ENCODE measurements at regions of chr17 and their contacts with region 1.

Region 1: DNA sequence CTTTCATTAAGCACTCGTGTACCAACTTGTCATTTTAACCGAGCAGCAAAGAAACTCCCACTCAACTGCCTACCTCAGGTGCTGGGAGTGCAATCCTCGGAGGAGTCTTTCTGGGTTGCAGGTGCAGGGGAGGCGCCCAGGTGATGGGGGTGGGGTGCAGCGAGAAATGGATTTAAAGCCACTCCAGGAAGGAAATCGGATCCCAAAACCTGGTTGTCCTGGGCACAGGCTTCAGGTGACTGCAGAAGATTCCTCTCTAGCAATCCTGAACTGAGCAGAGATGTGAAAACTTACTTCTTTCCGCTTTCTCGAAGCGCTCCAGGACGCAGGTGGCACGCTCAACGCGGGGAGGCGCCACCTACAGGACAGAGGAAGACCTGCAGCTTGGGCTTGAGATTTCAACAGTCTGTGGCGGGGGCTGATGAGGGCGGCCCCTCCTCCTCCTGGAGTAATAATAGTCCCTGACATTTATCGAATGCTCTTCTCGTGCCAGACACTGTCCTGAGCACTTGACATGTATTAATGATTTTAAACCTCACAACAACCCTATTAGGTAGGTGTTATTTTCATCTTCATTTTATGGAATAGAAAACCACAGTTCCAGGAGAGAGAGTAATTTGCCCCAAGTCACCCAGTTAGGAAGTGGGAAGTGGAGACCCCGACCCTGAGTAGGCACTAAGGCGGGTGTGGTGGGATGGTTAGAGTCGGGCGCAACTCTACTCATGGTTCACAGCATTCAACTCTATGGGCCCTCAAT is 27.2 kb upstream of the SKAP1 start:
- DNase-seq: peak; percentile 10 to 76
- H3K4me3 ChIP-seq: no peak overlapping the region
- H3K27ac ChIP-seq: no peak overlapping the region
- H3K4me1 ChIP-seq: peaks cover 0 to 3% of the 10 kb centered on the region in 2 donors
- H3K27me3 ChIP-seq: peaks cover 3% of the 10 kb centered on the region
- CTCF ChIP-seq: peak; percentile 61 to 95 (median 92)

Region 2: GRCh38 chr17:48335858-48336500 is 121.3 kb before region 1 on chr17:
- intact Hi-C with region 1: loop called (anchors 5 kb)
- DNase-seq: no peak
- H3K4me3 ChIP-seq: no peak overlapping the region
- H3K27ac ChIP-seq: no peak overlapping the region
- H3K4me1 ChIP-seq: no peaks in the 10 kb centered on the region
- H3K27me3 ChIP-seq: no peaks in the 10 kb centered on the region
- CTCF ChIP-seq: peak; percentile 59 to 72 (median 68)

Region 3: DNA sequence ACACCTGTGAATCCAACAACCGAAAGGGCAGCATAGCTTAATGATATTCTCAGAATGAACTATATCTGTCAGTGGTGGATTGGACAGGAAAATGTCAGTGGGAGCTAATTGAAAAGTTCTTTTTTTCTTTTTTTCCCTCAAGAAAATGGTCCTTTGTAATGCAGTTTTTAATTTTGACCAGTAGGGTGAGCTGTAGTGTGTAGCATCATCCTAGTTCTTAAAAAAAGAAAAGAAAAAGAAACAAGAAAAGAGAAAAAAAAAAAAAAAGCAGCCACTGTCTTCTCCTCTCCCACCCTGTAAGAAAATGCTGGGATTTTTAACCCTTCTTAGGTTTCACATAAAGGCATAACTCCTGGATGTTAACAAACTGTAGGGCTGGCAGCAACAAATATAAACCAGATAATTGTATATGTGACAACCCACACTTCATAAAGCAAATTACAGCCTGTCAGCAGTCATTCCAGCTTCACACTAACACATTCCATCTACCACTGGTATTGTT is 105.4 kb before region 1 on chr17:
- intact Hi-C with region 1: loop called (anchors 1 kb)
- DNase-seq: no peak
- H3K4me3 ChIP-seq: no peak overlapping the region
- H3K27ac ChIP-seq: no peak overlapping the region
- H3K4me1 ChIP-seq: no peaks in the 10 kb centered on the region
- H3K27me3 ChIP-seq: no peaks in the 10 kb centered on the region
- CTCF ChIP-seq: peak; percentile 50 to 77 (median 67)

Measured in ascending aorta (tissue), 2 donors.